ENCODE measurements at regions of chr10 and their contacts with region 1.

Region 1: GRCh38 chr10:120948889-120949608 is 97.9 kb downstream of the WDR11 start:
- DNase-seq: no peak
- H3K4me3 ChIP-seq: no peak overlapping the region
- H3K27ac ChIP-seq: no peak overlapping the region
- H3K4me1 ChIP-seq: no peaks in the 10 kb centered on the region
- H3K27me3 ChIP-seq: peaks cover 51% of the 10 kb centered on the region
- CTCF ChIP-seq: peak; percentile 47; the same call in 1 of the 2 replicates

Region 2: GRCh38 chr10:120667276-120667675 is 281.8 kb before region 1 on chr10:
- CTCF ChIA-PET with region 1: no interaction called
- POLR2A ChIA-PET with region 1: interaction called, 14 read pairs
- intact Hi-C with region 1: no loop called
- DNase-seq: no peak
- H3K4me3 ChIP-seq: no peak overlapping the region
- H3K27ac ChIP-seq: no peak overlapping the region
- H3K4me1 ChIP-seq: no peaks in the 10 kb centered on the region
- H3K27me3 ChIP-seq: peaks cover 20% of the 10 kb centered on the region
- CTCF ChIP-seq: no peak